Esophagus muscularis mucosa (tissue), 4 donors: ENCODE measurements at regions of chr2 and their contacts with region 1.

Region 1: DNA sequence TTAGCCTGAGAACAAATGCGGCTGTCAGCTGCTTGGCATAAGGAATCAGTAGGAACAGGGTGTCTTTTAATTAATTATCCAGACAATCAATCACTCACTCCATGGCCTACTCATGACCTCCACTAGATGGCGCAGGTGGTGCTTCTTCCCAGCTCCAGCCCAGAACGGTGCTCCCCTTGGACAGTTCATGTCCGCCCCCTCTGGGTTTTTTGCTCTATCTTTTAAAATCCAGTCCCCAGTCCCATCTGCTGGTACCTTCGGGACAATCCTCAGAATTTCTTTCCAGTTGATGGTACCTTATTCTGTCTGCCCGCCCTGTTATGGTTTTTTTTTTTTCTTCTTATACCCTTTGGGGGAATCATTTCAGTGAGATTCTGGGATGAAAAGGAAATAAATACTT is 99.8 kb downstream of the CACNB4 start:
- DNase-seq: no peak
- H3K4me3 ChIP-seq: no peak overlapping the region
- H3K27ac ChIP-seq: no peak overlapping the region
- H3K4me1 ChIP-seq: peaks cover 9 to 51% (median 45%) of the 10 kb centered on the region in 4 donors
- H3K27me3 ChIP-seq: no peaks in the 10 kb centered on the region
- CTCF ChIP-seq: peak; percentile 50 to 70 (median 61)
- EP300 ChIP-seq: no peak
- POLR2A ChIP-seq: no peak

Region 2: GRCh38 chr2:151828143-151828889 is 170.7 kb before region 1 on chr2 and contains the start of gene ARL5A:
- intact Hi-C with region 1: loop called (anchors 5 kb)
- DNase-seq: peak; percentile 98
- H3K4me3 ChIP-seq: peak within 1 kb of the TSS; percentile 80 to 94 (median 86)
- H3K27ac ChIP-seq: peak within 1 kb of the TSS; percentile 87 to 92 (median 89)
- H3K4me1 ChIP-seq: peaks cover 17 to 47% (median 46%) of the 10 kb centered on the region in 4 donors
- H3K27me3 ChIP-seq: no peaks in the 10 kb centered on the region
- CTCF ChIP-seq: peak in 1 of 3 experiments; percentile 18
- EP300 ChIP-seq: no peak
- POLR2A ChIP-seq: peak; percentile 57
- total RNA-seq, gene ARL5A: 60.1 to 82.2 (median 64.3) TPM

Region 3: GRCh38 chr2:151961558-151961957 is 37.5 kb before region 1 on chr2:
- intact Hi-C with region 1: loop called (anchors 5 kb)
- DNase-seq: no peak
- H3K4me3 ChIP-seq: no peak overlapping the region
- H3K27ac ChIP-seq: no peak overlapping the region
- H3K4me1 ChIP-seq: peaks cover 0 to 29% (median 25%) of the 10 kb centered on the region in 4 donors
- H3K27me3 ChIP-seq: no peaks in the 10 kb centered on the region
- CTCF ChIP-seq: no peak
- EP300 ChIP-seq: no peak
- POLR2A ChIP-seq: no peak

Region 4: GRCh38 chr2:152036611-152037469 is 37.8 kb after region 1 on chr2:
- intact Hi-C with region 1: no loop called
- DNase-seq: no peak
- H3K4me3 ChIP-seq: no peak overlapping the region
- H3K27ac ChIP-seq: peak overlapping the region in 1 of 4 donors; percentile 26
- H3K4me1 ChIP-seq: peaks cover 14 to 42% (median 19%) of the 10 kb centered on the region in 4 donors
- H3K27me3 ChIP-seq: no peaks in the 10 kb centered on the region
- CTCF ChIP-seq: peak; percentile 69 to 74 (median 72)
- EP300 ChIP-seq: no peak
- POLR2A ChIP-seq: no peak